Left colon (tissue), 2 donors: ENCODE measurements at regions of chr2 and their contacts with region 1.

Region 1: DNA sequence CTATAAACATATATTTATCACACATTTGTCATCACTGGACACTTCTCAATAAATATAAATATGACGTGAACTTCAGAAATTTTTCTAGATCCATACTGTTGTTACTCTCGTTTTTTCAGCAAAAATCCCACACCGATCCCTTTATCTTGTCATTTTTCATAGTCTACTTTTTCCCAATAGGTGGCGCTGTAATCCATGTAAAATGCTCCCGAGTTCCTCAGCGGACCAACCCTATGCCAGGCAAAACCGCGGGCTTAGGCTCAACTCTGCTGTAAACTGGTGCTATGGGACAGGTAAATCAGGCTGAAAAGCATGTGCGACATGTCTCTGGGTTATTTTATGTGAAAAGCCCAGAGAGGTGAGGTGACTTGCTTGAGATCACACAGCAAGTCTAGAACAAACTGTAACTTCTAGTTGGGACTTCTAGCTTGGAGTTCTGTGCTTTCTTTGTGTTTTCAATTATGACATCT is 104.0 kb downstream of the COBLL1 start:
- DNase-seq: peak; percentile 49 to 62
- ATAC-seq: peak; percentile 87

Region 2: DNA sequence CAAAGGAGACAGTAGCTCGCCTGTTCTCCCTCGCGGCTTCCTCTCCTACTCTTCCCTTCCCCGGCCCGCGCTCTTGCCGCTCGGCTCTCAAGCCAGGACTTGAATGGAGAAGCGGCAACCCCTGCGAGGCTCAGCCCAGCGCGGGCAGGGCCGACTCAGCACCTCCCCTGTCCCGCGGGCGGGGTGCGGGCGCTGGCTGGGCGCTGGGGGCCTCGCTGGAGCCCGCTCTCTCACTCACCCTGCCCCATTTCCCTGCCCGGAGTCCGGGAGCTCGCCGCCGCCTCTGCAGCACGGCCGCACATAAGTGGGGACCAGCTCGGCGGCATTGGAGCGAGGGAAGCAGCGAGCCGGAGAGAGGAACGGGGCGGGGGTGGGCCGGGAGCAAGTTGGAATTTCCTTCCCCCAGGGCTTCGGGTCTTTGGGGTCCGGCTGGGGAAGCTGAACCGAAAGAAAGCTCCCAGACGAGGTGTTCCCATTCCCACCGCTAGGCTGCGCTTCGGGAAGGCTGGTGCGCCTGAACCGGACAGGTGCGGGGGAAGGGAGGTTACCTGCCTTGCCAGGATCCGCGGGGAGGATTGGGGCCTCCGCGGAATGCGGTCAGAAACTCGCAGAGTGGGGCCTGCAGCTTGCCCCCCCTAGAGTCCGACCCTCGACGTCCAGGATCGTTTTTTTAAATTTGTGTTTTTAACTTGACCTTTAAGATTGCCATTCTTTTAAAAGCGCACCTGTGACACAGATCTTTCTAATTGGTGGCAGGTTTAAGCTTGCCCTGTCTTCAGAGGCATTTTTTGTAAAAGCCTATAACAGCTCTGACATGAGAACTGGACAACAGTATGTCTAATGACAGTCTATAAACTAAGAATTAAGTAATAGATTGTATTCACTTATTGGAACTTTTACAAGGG is 104.3 kb after region 1 on chr2 and contains the start of gene COBLL1:
- intact Hi-C with region 1: loop called in 1 of 2 experiments (anchors 10 kb)
- DNase-seq: peak; percentile 83 to 89
- ATAC-seq: peak; percentile 78
- total RNA-seq, gene COBLL1: 25.5 to 33.3 TPM

Region 3: GRCh38 chr2:164917296-164917903 is 179.8 kb after region 1 on chr2:
- intact Hi-C with region 1: loop called in 1 of 2 experiments (anchors 2 kb)
- DNase-seq: peak in 1 of 2 donors; percentile 54
- ATAC-seq: peak; percentile 62